Heart left ventricle (tissue), 16 donors: ENCODE measurements at regions of chr3 and their contacts with region 1.

Region 1: GRCh38 chr3:53709860-53710674 is 136.2 kb downstream of the CHDH start:
- DNase-seq: peak; percentile 53 to 81 (median 65)
- ATAC-seq: peak; percentile 55 to 74 (median 64)
- H3K4me3 ChIP-seq: no peak overlapping the region
- H3K27ac ChIP-seq: peak overlapping the region in 3 of 12 donors; percentile 6 to 75 (median 65)
- H3K4me1 ChIP-seq: peaks cover 0 to 63% (median 12%) of the 10 kb centered on the region in 12 donors
- H3K27me3 ChIP-seq: peaks cover 0 to 8% (median 0%) of the 10 kb centered on the region in 9 donors
- CTCF ChIP-seq: peak; percentile 64 to 85 (median 79)
- POLR2A ChIP-seq: no peak

Region 2: DNA sequence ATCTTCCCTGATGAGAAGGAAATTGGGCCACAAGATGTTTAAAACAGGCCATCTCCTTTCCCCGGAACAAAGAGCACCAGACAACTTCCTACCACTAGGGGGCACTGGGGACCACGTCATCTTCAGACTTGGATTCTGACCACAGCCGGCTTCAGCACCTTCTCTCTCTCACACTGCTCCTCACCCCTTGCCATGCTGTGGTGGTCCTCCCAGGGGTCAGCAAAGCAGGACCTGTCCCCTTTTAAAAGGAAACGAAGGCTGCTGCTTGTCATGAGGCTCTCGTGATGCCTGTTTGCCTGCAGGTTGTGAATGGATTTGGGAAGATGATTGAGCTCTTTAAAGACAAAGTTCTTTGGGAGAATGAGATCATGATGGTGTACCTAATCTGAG is 596.1 kb before region 1 on chr3:
- intact Hi-C with region 1: loop called in 2 of 10 experiments (anchors 10 kb)
- DNase-seq: peak; percentile 78 to 85 (median 83)
- ATAC-seq: peak; percentile 76 to 89 (median 84)
- H3K4me3 ChIP-seq: no peak overlapping the region
- H3K27ac ChIP-seq: peak overlapping the region in 11 of 12 donors; percentile 63 to 88 (median 80)
- H3K4me1 ChIP-seq: peaks cover 0 to 25% (median 11%) of the 10 kb centered on the region in 12 donors
- H3K27me3 ChIP-seq: no peaks in the 10 kb centered on the region
- CTCF ChIP-seq: peak; percentile 84 to 96 (median 90)
- POLR2A ChIP-seq: no peak

Region 3: DNA sequence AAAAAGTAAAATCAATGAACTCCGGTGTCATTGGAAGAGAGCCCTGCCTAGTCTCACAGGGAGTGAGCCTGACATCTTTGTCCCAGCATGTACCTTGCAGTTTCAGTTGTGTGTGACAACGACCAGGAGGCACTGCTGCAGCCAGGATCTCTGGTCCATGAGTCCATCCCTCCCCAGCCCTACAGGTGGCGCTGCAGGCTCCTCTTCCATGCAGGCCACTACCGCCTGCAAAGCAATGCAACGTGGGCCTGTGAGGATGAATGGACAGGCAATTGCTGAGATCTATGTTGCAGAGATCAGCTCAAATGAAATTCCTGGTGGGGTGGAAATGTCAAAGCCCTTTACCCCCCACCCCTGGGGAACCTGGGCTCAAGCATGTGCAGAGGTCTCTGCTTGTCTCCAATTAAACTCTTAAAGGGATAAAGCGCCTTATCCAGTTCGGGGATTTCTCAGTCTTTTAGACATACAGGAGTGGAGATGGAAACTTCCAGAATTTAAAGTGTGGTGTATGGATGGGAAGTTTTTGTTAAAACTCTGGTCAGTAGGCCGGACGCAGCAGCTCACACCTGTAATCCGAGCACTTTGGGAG is 490.1 kb before region 1 on chr3:
- intact Hi-C with region 1: loop called in 4 of 10 experiments (anchors 5 to 10 kb)
- DNase-seq: peak; percentile 70 to 89 (median 82)
- ATAC-seq: peak; percentile 53 to 87 (median 86)
- H3K4me3 ChIP-seq: no peak overlapping the region
- H3K27ac ChIP-seq: no peak overlapping the region
- H3K4me1 ChIP-seq: peaks cover 0 to 23% (median 0%) of the 10 kb centered on the region in 12 donors
- H3K27me3 ChIP-seq: no peaks in the 10 kb centered on the region
- CTCF ChIP-seq: peak; percentile 76 to 95 (median 86)
- POLR2A ChIP-seq: no peak

Region 4: DNA sequence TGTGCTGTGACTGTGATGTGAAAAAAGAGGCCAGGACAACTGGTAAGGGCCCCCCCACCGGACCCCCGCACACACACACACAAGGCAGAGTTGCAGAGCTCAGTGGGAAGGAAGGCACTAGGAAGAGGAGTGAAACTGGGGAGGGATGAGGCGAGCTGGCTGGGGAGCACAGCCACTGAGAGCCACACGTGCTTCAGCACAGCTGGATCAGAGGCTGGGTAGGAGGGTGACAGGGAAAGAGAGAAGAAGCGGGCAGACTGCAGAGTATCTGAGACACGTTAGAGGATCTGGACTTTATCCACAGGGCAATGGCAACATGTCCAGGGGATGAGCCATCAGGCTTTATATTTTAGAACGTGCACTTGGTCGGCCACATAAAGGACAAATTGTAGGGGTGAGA is 416.2 kb before region 1 on chr3:
- intact Hi-C with region 1: loop called in 7 of 10 experiments (anchors 1 to 5 kb)
- DNase-seq: no peak
- ATAC-seq: peak in 3 of 4 donors; percentile 61 to 75 (median 66)
- H3K4me3 ChIP-seq: no peak overlapping the region
- H3K27ac ChIP-seq: no peak overlapping the region
- H3K4me1 ChIP-seq: peaks cover 0 to 22% (median 0%) of the 10 kb centered on the region in 12 donors
- H3K27me3 ChIP-seq: no peaks in the 10 kb centered on the region
- CTCF ChIP-seq: no peak
- POLR2A ChIP-seq: no peak

Region 5: GRCh38 chr3:53303957-53304356 is 406.1 kb before region 1 on chr3:
- intact Hi-C with region 1: loop called (anchors 1 to 5 kb)
- DNase-seq: no peak
- ATAC-seq: peak in 2 of 4 donors; percentile 46 to 52
- H3K4me3 ChIP-seq: no peak overlapping the region
- H3K27ac ChIP-seq: peak overlapping the region; percentile 16 to 82 (median 60)
- H3K4me1 ChIP-seq: peaks cover 0 to 27% (median 7%) of the 10 kb centered on the region in 12 donors
- H3K27me3 ChIP-seq: no peaks in the 10 kb centered on the region
- CTCF ChIP-seq: no peak
- POLR2A ChIP-seq: no peak

Region 6: GRCh38 chr3:53375019-53375418 is 335.0 kb before region 1 on chr3:
- intact Hi-C with region 1: loop called in 8 of 10 experiments (anchors 5 to 10 kb)
- DNase-seq: peak; percentile 11 to 78 (median 46)
- ATAC-seq: peak in 3 of 4 donors; percentile 81 to 84 (median 84)
- H3K4me3 ChIP-seq: no peak overlapping the region
- H3K27ac ChIP-seq: no peak overlapping the region
- H3K4me1 ChIP-seq: no peaks in the 10 kb centered on the region
- H3K27me3 ChIP-seq: peaks cover 0 to 5% (median 0%) of the 10 kb centered on the region in 9 donors
- CTCF ChIP-seq: peak; percentile 36 to 68 (median 58)
- POLR2A ChIP-seq: no peak

Region 7: GRCh38 chr3:53613125-53613524 is 96.9 kb before region 1 on chr3:
- intact Hi-C with region 1: no loop called
- DNase-seq: no peak
- ATAC-seq: peak in 3 of 4 donors; percentile 18 to 62 (median 46)
- H3K4me3 ChIP-seq: no peak overlapping the region
- H3K27ac ChIP-seq: peak overlapping the region in 1 of 12 donors; percentile 64
- H3K4me1 ChIP-seq: peaks cover 0 to 19% (median 0%) of the 10 kb centered on the region in 12 donors
- H3K27me3 ChIP-seq: peaks cover 0 to 18% (median 0%) of the 10 kb centered on the region in 9 donors
- CTCF ChIP-seq: no peak
- POLR2A ChIP-seq: no peak

Region 8: GRCh38 chr3:53677413-53677812 is 32.7 kb before region 1 on chr3:
- intact Hi-C with region 1: loop called in 4 of 10 experiments (anchors 1 to 5 kb)
- DNase-seq: peak in 1 of 5 donors; percentile 19
- ATAC-seq: peak; percentile 40 to 87 (median 82)
- H3K4me3 ChIP-seq: no peak overlapping the region
- H3K27ac ChIP-seq: no peak overlapping the region
- H3K4me1 ChIP-seq: peaks cover 0 to 6% (median 0%) of the 10 kb centered on the region in 12 donors
- H3K27me3 ChIP-seq: peaks cover 0 to 29% (median 2%) of the 10 kb centered on the region in 9 donors
- CTCF ChIP-seq: peak in 11 of 12 donors; percentile 16 to 54 (median 35)
- POLR2A ChIP-seq: no peak